CD8-positive, alpha-beta memory T cell (primary cell): ENCODE measurements at regions of chr19 and their contacts with region 1.

Region 1: GRCh38 chr19:12945479-12946091 is at the start of gene RAD23A:
- DNase-seq: peak; percentile 98 to 99 (median 98)
- H3K4me3 ChIP-seq: peak within 1 kb of the TSS; percentile 73
- H3K4me3 Mint-ChIP-seq: peak within 1 kb of the TSS; percentile 87 to 96 (median 91)
- H3K27ac ChIP-seq: peak within 1 kb of the TSS; percentile 74
- H3K27ac Mint-ChIP-seq: peak within 1 kb of the TSS; percentile 95 to 98 (median 96)
- H3K4me1 ChIP-seq: peaks cover 31% of the 10 kb centered on the region
- H3K4me1 Mint-ChIP-seq: peaks cover 34 to 62% (median 38%) of the 10 kb centered on the region in 3 donors
- H3K27me3 ChIP-seq: no peaks in the 10 kb centered on the region
- H3K27me3 Mint-ChIP-seq: peaks cover 0 to 6% of the 10 kb centered on the region in 2 donors
- total RNA-seq, gene RAD23A: 227 to 230 TPM

Region 2: GRCh38 chr19:12806239-12807081 is 139.1 kb before region 1 on chr19 and contains the start of gene RNASEH2A:
- CTCF ChIA-PET with region 1: no interaction called
- POLR2A ChIA-PET with region 1: no interaction called
- DNase-seq: peak; percentile 79 to 88 (median 81)
- H3K4me3 ChIP-seq: peak within 1 kb of the TSS; percentile 59
- H3K4me3 Mint-ChIP-seq: peak within 1 kb of the TSS; percentile 89 to 95 (median 92)
- H3K27ac ChIP-seq: peak within 1 kb of the TSS; percentile 75
- H3K27ac Mint-ChIP-seq: peak within 1 kb of the TSS; percentile 66 to 94 (median 88)
- H3K4me1 ChIP-seq: peaks cover 20% of the 10 kb centered on the region
- H3K4me1 Mint-ChIP-seq: peaks cover 18 to 25% (median 21%) of the 10 kb centered on the region in 3 donors
- H3K27me3 ChIP-seq: no peaks in the 10 kb centered on the region
- H3K27me3 Mint-ChIP-seq: peaks cover 0 to 4% of the 10 kb centered on the region in 2 donors
- total RNA-seq, gene RNASEH2A: 51.5 to 62.4 TPM

Region 3: GRCh38 chr19:12956446-12957388 is 11.1 kb after region 1 on chr19 and contains the start of gene GADD45GIP1:
- CTCF ChIA-PET with region 1: interaction called, 4 read pairs
- POLR2A ChIA-PET with region 1: interaction called, 12 read pairs
- DNase-seq: peak; percentile 63 to 85 (median 75)
- H3K4me3 ChIP-seq: peak within 1 kb of the TSS; percentile 73
- H3K4me3 Mint-ChIP-seq: peak within 1 kb of the TSS; percentile 86 to 93 (median 89)
- H3K27ac ChIP-seq: peak within 1 kb of the TSS; percentile 67
- H3K27ac Mint-ChIP-seq: peak within 1 kb of the TSS; percentile 65 to 95 (median 92)
- H3K4me1 ChIP-seq: peaks cover 15% of the 10 kb centered on the region
- H3K4me1 Mint-ChIP-seq: peaks cover 22 to 30% (median 24%) of the 10 kb centered on the region in 3 donors
- H3K27me3 ChIP-seq: no peaks in the 10 kb centered on the region
- H3K27me3 Mint-ChIP-seq: no peaks in the 10 kb centered on the region
- total RNA-seq, gene GADD45GIP1: 37.3 to 38.6 TPM

Region 4: GRCh38 chr19:14375055-14375581 is 1429.5 kb after region 1 on chr19:
- CTCF ChIA-PET with region 1: no interaction called
- POLR2A ChIA-PET with region 1: interaction called, 10 read pairs
- DNase-seq: peak; percentile 77 to 95 (median 92)
- H3K4me3 ChIP-seq: peak overlapping the region; percentile 45
- H3K4me3 Mint-ChIP-seq: peak overlapping the region; percentile 73 to 90 (median 79)
- H3K27ac ChIP-seq: peak overlapping the region; percentile 100
- H3K27ac Mint-ChIP-seq: peak overlapping the region; percentile 85 to 100 (median 100)
- H3K4me1 ChIP-seq: peaks cover 71% of the 10 kb centered on the region
- H3K4me1 Mint-ChIP-seq: peaks cover 59 to 77% (median 66%) of the 10 kb centered on the region in 3 donors
- H3K27me3 ChIP-seq: no peaks in the 10 kb centered on the region
- H3K27me3 Mint-ChIP-seq: peaks cover 0 to 6% of the 10 kb centered on the region in 2 donors